Dendritic cell treated with granulocyte-macrophage colony-stimulating factor and Interleukin-4, amounts not matched to agents 40 ng/mL and 50 ng/mL, for 4 days (primary cell): ENCODE measurements at regions of chr5 and their contacts with region 1.

Region 1: DNA sequence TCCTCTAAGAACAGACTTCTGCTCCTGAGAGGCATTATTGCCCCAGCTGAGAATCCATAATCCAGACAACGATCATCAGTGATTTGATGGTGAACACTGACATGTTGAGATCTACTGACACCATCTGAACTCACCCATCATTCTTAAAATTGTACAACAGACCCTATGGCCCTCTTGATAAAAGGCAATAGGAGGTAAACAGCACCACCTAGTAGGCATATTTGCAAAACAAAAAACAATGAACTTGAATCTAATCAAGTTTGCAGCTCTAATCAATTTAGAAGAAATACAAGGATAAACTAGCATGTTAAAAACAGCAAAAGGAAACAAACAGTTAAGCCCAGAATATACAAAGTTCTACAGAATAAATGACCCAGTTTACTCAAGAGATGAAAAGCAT is 89.6 kb downstream of the SFXN1 start:
- H3K4me3 Mint-ChIP-seq: no peak overlapping the region
- H3K27ac Mint-ChIP-seq: no peak overlapping the region
- H3K4me1 Mint-ChIP-seq: peaks cover 6% of the 10 kb centered on the region
- H3K27me3 Mint-ChIP-seq: peaks cover 11% of the 10 kb centered on the region

Region 2: GRCh38 chr5:175534070-175534932 is 33.7 kb before region 1 on chr5:
- intact Hi-C with region 1: loop called (anchors 1 kb)
- H3K4me3 Mint-ChIP-seq: peak overlapping the region; percentile 53
- H3K27ac Mint-ChIP-seq: peak overlapping the region; percentile 65
- H3K4me1 Mint-ChIP-seq: peaks cover 28% of the 10 kb centered on the region
- H3K27me3 Mint-ChIP-seq: peaks cover 6% of the 10 kb centered on the region

Region 3: GRCh38 chr5:175579742-175580432 is 11.9 kb after region 1 on chr5:
- intact Hi-C with region 1: no loop called
- H3K4me3 Mint-ChIP-seq: no peak overlapping the region
- H3K27ac Mint-ChIP-seq: no peak overlapping the region
- H3K4me1 Mint-ChIP-seq: peaks cover 12% of the 10 kb centered on the region
- H3K27me3 Mint-ChIP-seq: peaks cover 7% of the 10 kb centered on the region

Region 4: GRCh38 chr5:175718401-175719108 is 150.6 kb after region 1 on chr5:
- intact Hi-C with region 1: loop called (anchors 2 kb)
- H3K4me3 Mint-ChIP-seq: no peak overlapping the region
- H3K27ac Mint-ChIP-seq: no peak overlapping the region
- H3K4me1 Mint-ChIP-seq: peaks cover 10% of the 10 kb centered on the region
- H3K27me3 Mint-ChIP-seq: peaks cover 4% of the 10 kb centered on the region